ENCODE measurements at regions of chr14 and their contacts with region 1.

Region 1: GRCh38 chr14:71366861-71367260 is 459.6 kb downstream of the PCNX1 start:
- DNase-seq: no peak
- H3K4me3 ChIP-seq: no peak overlapping the region
- H3K27me3 ChIP-seq: no peaks in the 10 kb centered on the region
- CTCF ChIP-seq: no peak

Region 2: DNA sequence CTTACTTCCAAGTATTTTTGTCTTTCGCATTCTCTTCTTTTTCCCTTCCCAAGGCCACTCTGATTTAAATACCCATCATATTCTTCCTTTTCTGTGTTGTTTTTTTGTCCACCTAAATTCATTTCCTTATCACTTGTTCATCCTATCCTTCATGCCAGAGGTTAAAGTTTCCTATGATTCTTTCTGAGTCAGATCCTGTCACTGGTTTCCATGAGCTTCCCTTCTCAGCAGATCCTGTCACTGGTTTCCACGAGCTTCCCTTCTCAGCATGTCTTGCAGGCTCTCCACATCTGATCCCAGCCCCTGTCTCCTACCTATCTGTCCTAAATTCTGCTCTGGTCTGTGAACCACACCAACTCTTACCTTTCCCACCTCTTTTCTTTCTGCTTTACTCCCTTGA is 253.5 kb after region 1 on chr14:
- CTCF ChIA-PET with region 1: no interaction called
- POLR2A ChIA-PET with region 1: interaction called, 10 read pairs
- DNase-seq: no peak
- H3K4me3 ChIP-seq: no peak overlapping the region
- H3K27me3 ChIP-seq: no peaks in the 10 kb centered on the region
- CTCF ChIP-seq: no peak